K562 (cell line): ENCODE measurements at regions of chr6 and their contacts with region 1.

Region 1: DNA sequence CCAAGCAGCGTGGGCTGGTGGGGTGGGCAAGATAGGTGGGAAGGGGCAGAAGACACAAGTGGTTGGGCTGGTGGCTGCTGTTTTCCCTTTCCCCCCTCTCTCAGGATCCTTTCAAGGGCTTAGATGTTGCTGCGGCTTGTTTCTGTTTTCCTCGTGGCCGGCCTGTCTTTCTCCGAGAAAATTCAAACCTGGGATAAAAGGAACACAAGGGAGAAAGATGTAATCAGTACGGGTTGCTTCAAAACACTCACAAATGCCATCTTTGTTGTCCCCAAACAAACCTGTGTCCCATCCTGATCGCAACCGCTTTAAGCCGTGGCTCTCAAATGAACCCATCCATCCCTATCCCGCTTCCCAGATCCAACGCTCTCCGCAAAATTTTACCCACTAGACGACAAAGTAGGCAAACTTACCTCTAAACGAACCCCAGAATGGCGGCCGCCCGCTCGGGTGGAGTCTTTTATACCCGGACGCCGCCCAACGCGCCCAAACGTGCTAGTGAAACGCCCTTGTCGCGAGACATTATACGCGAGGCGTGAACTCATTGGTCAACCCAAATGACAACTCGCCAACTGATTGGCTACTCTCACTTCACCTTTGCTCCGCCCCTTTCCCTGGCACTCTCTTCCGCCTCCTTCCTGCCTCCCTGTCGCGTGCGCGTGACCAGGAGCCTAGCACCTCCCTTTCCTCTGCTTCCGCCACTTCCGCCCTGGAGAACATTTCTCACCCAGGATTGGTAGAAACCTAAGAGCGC is at the start of gene PPP1R10:
- DNase-seq: peak; percentile 96 to 100 (median 98)
- ATAC-seq: peak; percentile 77
- H3K4me3 ChIP-seq: peak within 1 kb of the TSS; percentile 68
- H3K27ac ChIP-seq: peak within 1 kb of the TSS; percentile 99
- H3K4me1 ChIP-seq: peaks cover 4 to 26% of the 10 kb centered on the region in 2 experiments; a peak in 4 of 5 replicates
- H3K27me3 ChIP-seq: no peaks in the 10 kb centered on the region
- CTCF ChIP-seq: peak in 1 of 3 experiments; percentile 7; a peak in 1 of 6 replicates
- EP300 ChIP-seq: peak; percentile 39; the same call in 1 of the 2 replicates
- POLR2A ChIP-seq: peak; percentile 100
- RAD21 ChIP-seq: no peak
- polyA plus RNA-seq, gene PPP1R10: 14.1 to 21.9 TPM

Region 2: DNA sequence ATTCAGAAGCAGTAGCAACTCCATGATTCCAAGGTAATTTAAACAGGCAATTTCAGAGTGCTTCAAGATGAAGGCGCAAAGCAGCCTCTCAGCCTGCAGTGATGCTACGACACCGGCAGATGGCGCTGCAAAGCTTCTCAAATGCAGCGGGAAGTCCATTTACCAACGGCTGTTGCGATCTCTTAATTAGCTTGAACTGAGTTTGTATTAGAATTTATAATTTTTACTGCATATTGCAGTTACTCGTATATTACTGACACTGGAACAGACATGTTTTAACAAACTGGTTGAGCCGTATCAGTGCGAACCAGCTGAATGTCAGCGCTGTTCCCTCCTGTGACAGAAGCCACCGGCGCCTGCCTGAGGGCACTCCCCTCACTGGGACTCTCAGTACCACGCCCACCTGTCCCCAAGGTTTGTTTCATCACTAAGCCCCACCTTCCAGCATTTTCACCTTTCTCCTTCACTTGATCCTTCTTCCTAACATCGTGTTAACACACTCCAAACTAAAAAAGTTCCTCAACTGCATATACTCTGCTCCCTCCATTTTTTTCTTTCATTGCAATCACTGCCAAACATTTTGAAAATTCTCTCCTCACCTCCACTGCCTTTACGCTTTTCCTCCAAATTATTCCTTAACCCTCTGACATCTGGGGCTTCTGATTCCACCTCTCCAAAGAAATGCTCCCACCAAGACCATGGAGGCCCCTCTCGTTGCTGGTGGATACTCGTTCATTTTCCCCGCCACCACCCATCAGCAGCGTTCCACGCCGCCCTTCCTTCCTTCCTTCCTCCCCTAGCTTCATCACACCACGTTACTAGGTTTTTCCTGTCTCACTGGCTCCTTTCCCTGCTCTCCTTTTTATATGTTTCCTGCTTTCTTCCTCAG is 75.2 kb before region 1 on chr6:
- CTCF ChIA-PET with region 1: no interaction called
- POLR2A ChIA-PET with region 1: interaction called, 10 read pairs
- in situ Hi-C with region 1: no loop called
- intact Hi-C with region 1: no loop called
- DNase-seq: peak; percentile 85 to 92 (median 90)
- ATAC-seq: peak; percentile 94
- H3K4me3 ChIP-seq: peak overlapping the region; percentile 32
- H3K27ac ChIP-seq: no peak overlapping the region
- H3K4me1 ChIP-seq: peaks cover 0 to 2% of the 10 kb centered on the region in 2 experiments; a peak in 2 of 5 replicates
- H3K27me3 ChIP-seq: no peaks in the 10 kb centered on the region
- CTCF ChIP-seq: peak; percentile 95 to 100 (median 98)
- EP300 ChIP-seq: no peak
- POLR2A ChIP-seq: peak; percentile 43
- RAD21 ChIP-seq: peak; percentile 87 to 91

Region 3: DNA sequence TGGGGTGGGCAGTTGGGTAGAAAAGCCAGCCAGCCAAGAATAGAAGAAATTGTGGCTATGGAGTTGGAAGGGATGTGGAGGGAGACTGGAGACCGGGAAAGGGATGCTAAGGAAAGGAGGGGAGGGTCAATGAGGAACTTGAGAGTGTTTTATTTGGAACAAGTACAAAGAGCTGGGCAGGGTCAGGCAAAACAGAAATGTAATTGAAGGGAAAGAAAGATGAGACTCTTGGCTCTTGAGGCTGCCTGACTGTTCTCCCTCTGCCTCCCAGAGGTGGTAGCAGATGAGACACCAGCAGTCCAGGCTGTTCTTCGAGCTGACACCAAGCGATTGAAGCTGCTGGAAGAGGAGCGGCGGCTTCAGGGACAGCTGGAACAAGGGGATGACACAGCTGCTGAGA is 33.1 kb before region 1 on chr6:
- CTCF ChIA-PET with region 1: no interaction called
- POLR2A ChIA-PET with region 1: interaction called, 67 read pairs
- in situ Hi-C with region 1: no loop called
- intact Hi-C with region 1: no loop called
- DNase-seq: no peak
- ATAC-seq: no peak
- H3K4me3 ChIP-seq: no peak overlapping the region
- H3K27ac ChIP-seq: no peak overlapping the region
- H3K4me1 ChIP-seq: no peaks in the 10 kb centered on the region
- H3K27me3 ChIP-seq: no peaks in the 10 kb centered on the region
- CTCF ChIP-seq: no peak
- EP300 ChIP-seq: no peak
- POLR2A ChIP-seq: no peak
- RAD21 ChIP-seq: no peak

Region 4: DNA sequence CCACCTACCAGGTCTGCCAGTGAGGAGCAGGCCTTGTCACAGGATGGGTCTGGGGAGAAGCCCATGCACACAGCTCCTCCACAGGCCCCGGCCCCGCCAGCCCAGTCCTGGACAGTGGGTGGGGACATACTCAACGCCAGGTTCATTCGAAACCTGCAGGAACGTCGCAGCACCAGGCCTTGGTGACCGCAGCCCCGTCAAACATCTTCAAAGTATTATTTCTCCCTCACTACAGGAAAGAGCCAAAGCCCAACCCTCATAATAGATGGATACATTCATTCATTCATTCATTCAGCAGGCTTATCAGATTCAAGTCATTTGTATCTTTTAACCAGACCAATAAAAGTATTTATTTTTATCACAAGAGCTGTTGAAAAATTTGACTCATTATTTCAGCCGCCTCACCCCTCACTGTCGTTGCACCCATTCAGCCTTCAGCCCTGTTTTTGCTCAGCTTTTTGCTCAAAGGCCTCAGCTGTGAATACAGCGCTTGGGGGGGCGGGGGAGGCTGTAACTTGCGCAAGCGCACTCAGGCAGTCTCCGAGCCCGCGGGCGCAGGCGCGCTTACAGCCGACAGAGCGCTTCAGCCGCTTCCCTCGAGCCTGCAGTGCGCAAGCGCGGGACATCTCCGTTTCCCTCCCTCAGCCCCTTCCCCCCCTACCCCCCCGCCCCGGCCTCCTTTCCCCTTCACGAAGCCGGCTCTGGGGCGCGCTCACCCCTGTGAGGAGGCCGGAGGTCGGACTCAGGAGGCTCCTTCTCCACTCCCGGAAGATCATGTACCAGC is 29.7 kb after region 1 on chr6 and contains the start of gene C6orf136:
- CTCF ChIA-PET with region 1: no interaction called
- POLR2A ChIA-PET with region 1: interaction called, 46 read pairs
- in situ Hi-C with region 1: no loop called
- intact Hi-C with region 1: loop called (anchors 2 kb)
- DNase-seq: peak; percentile 95 to 99 (median 98)
- ATAC-seq: peak; percentile 87
- H3K4me3 ChIP-seq: peak within 1 kb of the TSS; percentile 68
- H3K27ac ChIP-seq: peak within 1 kb of the TSS; percentile 83
- H3K4me1 ChIP-seq: peaks cover 15 to 29% of the 10 kb centered on the region in 2 experiments
- H3K27me3 ChIP-seq: no peaks in the 10 kb centered on the region
- CTCF ChIP-seq: no peak
- EP300 ChIP-seq: no peak
- POLR2A ChIP-seq: no peak
- RAD21 ChIP-seq: no peak
- polyA plus RNA-seq, gene C6orf136: 18.4 to 18.5 TPM

Region 5: DNA sequence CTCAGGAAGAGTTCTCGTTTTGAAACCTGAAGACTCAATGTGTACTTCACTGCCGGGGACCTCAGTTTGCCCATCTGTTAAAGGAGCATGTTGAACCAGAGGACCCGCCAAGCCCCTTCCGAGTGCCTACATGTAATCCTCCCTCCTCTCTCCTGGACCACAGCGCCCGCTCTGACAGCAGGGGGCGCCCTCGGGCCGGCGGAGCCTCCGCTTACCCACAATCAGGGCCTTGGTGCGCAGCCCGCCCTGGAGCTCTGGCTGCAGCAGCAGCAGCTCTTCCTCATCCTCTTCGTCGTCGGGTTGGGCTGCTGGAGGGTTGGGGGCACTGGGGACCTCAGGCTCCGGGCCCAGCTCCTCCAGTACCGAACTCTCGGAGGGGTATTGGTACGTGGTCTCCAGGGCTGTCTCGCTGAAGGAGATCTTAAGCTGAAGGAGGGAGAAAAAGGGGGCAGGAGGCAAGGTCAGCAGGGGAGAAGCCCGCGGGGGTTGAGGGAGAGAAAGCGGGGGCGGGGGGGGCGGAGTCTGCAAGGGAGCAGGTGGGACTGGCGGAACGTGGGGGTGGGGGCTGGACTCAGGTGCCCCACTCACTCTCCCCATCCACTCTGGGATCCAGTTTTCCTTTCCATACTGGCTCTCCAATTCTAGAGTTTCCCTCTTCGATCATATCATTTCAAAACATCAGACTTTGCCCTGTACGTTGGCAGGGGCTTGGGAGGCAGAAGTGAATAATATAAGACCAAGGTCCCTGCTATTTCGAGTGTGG is 62.2 kb after region 1 on chr6:
- CTCF ChIA-PET with region 1: no interaction called
- POLR2A ChIA-PET with region 1: interaction called, 12 read pairs
- in situ Hi-C with region 1: no loop called
- intact Hi-C with region 1: no loop called
- DNase-seq: peak; percentile 81 to 95 (median 87)
- ATAC-seq: peak; percentile 79
- H3K4me3 ChIP-seq: peak overlapping the region; percentile 1; the same call in 1 of the 2 replicates
- H3K27ac ChIP-seq: no peak overlapping the region
- H3K4me1 ChIP-seq: peaks cover 29 to 48% of the 10 kb centered on the region in 2 experiments
- H3K27me3 ChIP-seq: no peaks in the 10 kb centered on the region
- CTCF ChIP-seq: peak; percentile 97 to 99 (median 98)
- EP300 ChIP-seq: peak; percentile 30; the same call in 1 of the 2 replicates
- POLR2A ChIP-seq: no peak
- RAD21 ChIP-seq: peak; percentile 98 to 99

Region 6: DNA sequence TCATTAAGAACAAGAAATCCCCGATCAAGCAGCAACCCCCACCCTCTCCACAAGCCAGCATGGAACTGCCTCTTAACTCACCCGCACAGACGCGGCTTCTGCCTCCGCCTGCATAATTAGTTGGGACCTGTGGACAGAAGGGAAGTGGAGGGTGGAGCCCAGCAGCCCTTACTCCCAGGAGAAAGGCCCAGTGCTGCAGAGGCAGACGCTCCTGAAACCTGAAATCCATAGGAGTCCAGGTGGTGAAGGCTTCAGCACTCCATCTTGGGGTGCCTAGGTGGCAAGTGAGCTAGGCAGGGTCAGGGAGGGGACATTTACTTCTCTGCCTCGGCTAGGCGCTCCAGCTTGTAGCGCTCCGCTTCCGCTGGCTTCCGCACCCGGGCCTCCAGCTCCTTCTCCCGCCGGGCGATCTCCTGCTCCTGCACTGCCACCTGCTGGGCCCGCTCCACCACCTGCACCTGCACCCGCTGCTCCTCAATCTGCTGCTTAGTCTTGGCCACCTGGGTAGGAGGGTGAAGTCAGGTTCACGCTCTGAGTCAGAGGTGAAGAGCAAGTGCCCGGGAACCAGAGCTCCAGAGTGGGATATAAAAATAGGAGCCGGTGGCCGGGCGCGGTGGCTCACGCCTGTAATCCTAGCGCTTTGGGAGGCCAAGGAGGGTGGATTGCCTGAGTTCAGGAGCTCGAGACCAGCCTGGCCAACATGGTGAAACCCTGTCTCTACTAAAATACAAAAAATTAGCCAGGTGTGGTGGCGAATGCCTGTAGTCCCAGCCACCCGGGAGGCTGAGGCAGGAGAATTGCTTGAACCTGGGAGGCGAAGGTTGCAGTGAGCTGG is 113.8 kb after region 1 on chr6:
- CTCF ChIA-PET with region 1: no interaction called
- POLR2A ChIA-PET with region 1: interaction called, 10 read pairs
- in situ Hi-C with region 1: no loop called
- intact Hi-C with region 1: no loop called
- DNase-seq: peak; percentile 79 to 86 (median 84)
- ATAC-seq: peak; percentile 90
- H3K4me3 ChIP-seq: no peak overlapping the region
- H3K27ac ChIP-seq: 0 out of 3 replicates have a peak overlapping the region, but pooled peaks have one; percentile 18
- H3K4me1 ChIP-seq: peaks cover 0 to 7% of the 10 kb centered on the region in 2 experiments; a peak in 3 of 5 replicates
- H3K27me3 ChIP-seq: no peaks in the 10 kb centered on the region
- CTCF ChIP-seq: peak; percentile 88 to 95 (median 90)
- EP300 ChIP-seq: no peak
- POLR2A ChIP-seq: no peak; the same call in 1 of the 2 replicates
- RAD21 ChIP-seq: peak; percentile 69 to 90

Region 7: DNA sequence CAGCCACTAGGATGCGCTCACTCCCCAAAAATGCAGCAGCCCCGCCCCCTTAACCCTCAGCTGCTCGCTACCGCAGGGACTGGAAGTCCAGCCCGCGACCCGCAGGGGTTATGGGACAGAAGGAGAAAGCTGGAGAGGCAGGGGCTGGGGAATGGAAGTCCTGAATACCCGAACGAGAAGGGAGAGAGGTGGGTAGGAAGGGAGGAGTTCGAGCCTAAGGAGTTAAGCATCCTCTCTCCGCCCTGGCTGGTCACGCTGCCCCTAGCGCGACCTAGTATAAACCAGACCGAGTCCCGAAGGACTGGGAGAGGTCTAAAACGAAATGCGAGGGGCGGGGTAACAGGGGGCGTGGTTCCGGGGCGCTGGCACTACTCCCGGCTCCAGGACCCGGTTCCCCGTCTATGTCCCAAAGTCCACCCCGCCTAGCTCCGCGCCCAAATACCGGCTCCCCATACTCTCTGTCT is 1112.6 kb after region 1 on chr6:
- CTCF ChIA-PET with region 1: no interaction called
- POLR2A ChIA-PET with region 1: no interaction called
- in situ Hi-C with region 1: no loop called
- intact Hi-C with region 1: no loop called
- DNase-seq: peak; percentile 91 to 97 (median 94)
- ATAC-seq: peak; percentile 84
- H3K4me3 ChIP-seq: peak overlapping the region; percentile 65
- H3K27ac ChIP-seq: peak overlapping the region; percentile 75
- H3K4me1 ChIP-seq: peaks cover 53 to 67% of the 10 kb centered on the region in 2 experiments
- H3K27me3 ChIP-seq: no peaks in the 10 kb centered on the region
- CTCF ChIP-seq: peak; percentile 12 to 99 (median 95); a peak in 5 of 6 replicates
- EP300 ChIP-seq: no peak; the same call in 1 of the 2 replicates
- POLR2A ChIP-seq: no peak; the same call in 1 of the 2 replicates
- RAD21 ChIP-seq: peak; percentile 99